ENCODE measurements at regions of chr13 and their contacts with region 1.

Region 1: DNA sequence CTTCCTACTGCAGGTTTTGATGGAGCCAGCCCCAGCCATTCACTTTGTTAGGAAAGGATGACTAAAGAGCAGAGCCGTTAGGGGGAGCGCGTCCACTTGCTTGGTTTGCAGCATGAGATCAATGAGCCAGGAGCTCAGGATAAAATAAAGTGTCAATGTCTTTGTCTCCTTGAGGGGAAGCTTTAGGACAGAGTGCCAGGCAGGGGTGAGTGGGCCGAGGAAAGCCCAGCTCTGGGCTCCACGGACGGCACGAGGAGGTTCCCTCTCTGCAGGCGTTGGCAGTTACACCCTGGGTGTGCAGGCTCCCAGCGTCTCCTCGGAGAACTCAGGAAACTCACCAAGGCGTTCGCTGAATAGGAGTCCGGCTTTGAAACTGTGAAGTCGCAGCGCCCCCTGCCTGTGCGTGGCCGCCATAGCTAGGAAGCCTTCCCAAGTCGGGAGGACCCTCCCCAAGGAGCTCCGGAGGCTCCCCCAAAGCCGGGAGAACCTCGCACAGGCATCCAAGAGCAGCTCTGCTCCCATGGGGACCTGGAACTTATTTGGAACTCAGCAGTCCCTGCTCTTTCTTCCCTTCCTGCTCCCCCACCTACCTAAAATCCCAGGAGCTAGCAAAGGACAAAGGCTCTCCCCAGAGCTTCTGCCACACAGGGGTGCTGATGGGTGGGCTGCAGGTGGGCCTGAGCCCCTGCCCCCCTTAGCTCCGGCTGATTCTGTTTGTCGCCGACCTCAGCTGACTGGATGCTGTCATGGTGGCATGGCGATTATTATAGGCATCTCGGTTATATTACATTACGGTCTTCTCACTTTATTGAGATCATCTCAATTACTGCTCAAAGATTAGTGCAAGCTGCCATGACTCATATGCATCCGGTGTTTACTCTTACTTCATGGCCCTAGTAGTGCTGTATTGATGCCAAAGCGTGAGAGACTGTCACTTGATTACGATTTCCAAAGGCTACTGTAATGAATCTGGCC is 34.4 kb downstream of the GSX1 start:
- DNase-seq: peak; percentile 79
- ATAC-seq: peak; percentile 69
- H3K4me3 ChIP-seq: no peak overlapping the region
- H3K4me3 Mint-ChIP-seq: no peak overlapping the region
- H3K27ac ChIP-seq: no peak overlapping the region
- H3K27ac Mint-ChIP-seq: no peak overlapping the region
- H3K4me1 ChIP-seq: peaks cover 5 to 15% of the 10 kb centered on the region in 2 donors
- H3K4me1 Mint-ChIP-seq: peaks cover 7% of the 10 kb centered on the region
- H3K27me3 ChIP-seq: peaks cover 0 to 76% (median 27%) of the 10 kb centered on the region in 4 experiments
- H3K27me3 Mint-ChIP-seq: peaks cover 76% of the 10 kb centered on the region
- CTCF ChIP-seq: peak; percentile 90

Region 2: DNA sequence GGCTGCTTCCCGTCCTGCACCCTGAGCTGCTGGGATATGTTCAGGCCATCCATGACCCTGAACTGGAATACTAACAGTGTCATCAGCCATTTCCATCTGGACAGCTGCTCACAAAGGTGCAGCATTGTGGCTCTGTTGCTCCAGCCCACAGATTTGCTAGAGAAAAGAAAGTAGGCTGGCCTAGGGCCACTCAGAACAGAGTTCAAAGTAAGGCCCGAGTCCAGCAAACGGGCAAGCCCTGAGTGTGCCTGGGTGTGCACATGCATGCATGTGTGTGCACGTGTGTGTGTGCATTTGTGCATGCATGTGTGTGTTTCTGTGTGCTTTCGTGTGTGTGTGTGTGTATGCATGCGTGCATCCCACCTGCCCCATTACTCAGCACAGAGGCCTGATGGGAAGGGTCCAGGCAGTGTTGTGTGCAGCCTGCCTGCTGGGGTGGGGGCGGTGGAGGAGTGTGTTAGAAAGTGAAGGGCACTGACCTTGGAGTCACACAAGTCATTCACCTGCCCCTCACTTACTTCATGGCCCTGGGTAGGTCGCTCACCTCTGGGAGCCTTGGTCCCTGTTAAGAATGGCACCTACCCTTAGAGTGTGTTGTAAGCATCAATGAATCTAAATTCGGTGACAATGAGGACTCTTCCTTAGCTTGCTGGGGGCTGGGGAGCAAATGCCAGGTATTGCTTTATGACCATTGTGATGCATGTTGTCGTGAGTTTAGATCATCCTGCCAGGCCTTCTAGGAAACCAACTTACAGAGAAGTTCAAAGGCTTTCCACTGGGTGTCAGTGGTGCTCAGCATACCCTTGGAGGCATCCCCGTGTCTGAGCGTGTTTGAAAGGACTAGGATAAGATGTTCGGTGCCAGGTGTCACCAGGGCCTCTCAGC is 1119.3 kb before region 1 on chr13:
- CTCF ChIA-PET with region 1: no interaction called
- POLR2A ChIA-PET with region 1: no interaction called
- intact Hi-C with region 1: no loop called
- DNase-seq: peak; percentile 47
- ATAC-seq: no peak
- H3K4me3 ChIP-seq: no peak overlapping the region
- H3K4me3 Mint-ChIP-seq: no peak overlapping the region
- H3K27ac ChIP-seq: no peak overlapping the region
- H3K27ac Mint-ChIP-seq: no peak overlapping the region
- H3K4me1 ChIP-seq: no peaks in the 10 kb centered on the region
- H3K4me1 Mint-ChIP-seq: no peaks in the 10 kb centered on the region
- H3K27me3 ChIP-seq: peaks cover 0 to 3% (median 0%) of the 10 kb centered on the region in 4 experiments
- H3K27me3 Mint-ChIP-seq: peaks cover 16% of the 10 kb centered on the region
- CTCF ChIP-seq: peak; percentile 55

Region 3: GRCh38 chr13:26985285-26985878 is 841.3 kb before region 1 on chr13:
- CTCF ChIA-PET with region 1: interaction called, 62 read pairs
- POLR2A ChIA-PET with region 1: no interaction called
- intact Hi-C with region 1: loop called (anchors 1 kb)
- DNase-seq: peak; percentile 84
- ATAC-seq: peak; percentile 94
- H3K4me3 ChIP-seq: no peak overlapping the region
- H3K4me3 Mint-ChIP-seq: no peak overlapping the region
- H3K27ac ChIP-seq: no peak overlapping the region
- H3K27ac Mint-ChIP-seq: no peak overlapping the region
- H3K4me1 ChIP-seq: peaks cover 0 to 5% of the 10 kb centered on the region in 2 donors
- H3K4me1 Mint-ChIP-seq: peaks cover 4% of the 10 kb centered on the region
- H3K27me3 ChIP-seq: peaks cover 0 to 10% (median 0%) of the 10 kb centered on the region in 4 experiments
- H3K27me3 Mint-ChIP-seq: peaks cover 3% of the 10 kb centered on the region
- CTCF ChIP-seq: peak; percentile 84

Region 4: GRCh38 chr13:27374650-27375049 is 452.0 kb before region 1 on chr13:
- CTCF ChIA-PET with region 1: interaction called, 374 read pairs
- POLR2A ChIA-PET with region 1: no interaction called
- intact Hi-C with region 1: loop called (anchors 1 kb)
- DNase-seq: peak; percentile 77
- ATAC-seq: peak; percentile 85
- H3K4me3 ChIP-seq: no peak overlapping the region
- H3K4me3 Mint-ChIP-seq: no peak overlapping the region
- H3K27ac ChIP-seq: no peak overlapping the region
- H3K27ac Mint-ChIP-seq: no peak overlapping the region
- H3K4me1 ChIP-seq: no peaks in the 10 kb centered on the region
- H3K4me1 Mint-ChIP-seq: peaks cover 2% of the 10 kb centered on the region
- H3K27me3 ChIP-seq: peaks cover 0 to 7% (median 0%) of the 10 kb centered on the region in 4 experiments
- H3K27me3 Mint-ChIP-seq: peaks cover 34% of the 10 kb centered on the region
- CTCF ChIP-seq: peak; percentile 82

Region 5: DNA sequence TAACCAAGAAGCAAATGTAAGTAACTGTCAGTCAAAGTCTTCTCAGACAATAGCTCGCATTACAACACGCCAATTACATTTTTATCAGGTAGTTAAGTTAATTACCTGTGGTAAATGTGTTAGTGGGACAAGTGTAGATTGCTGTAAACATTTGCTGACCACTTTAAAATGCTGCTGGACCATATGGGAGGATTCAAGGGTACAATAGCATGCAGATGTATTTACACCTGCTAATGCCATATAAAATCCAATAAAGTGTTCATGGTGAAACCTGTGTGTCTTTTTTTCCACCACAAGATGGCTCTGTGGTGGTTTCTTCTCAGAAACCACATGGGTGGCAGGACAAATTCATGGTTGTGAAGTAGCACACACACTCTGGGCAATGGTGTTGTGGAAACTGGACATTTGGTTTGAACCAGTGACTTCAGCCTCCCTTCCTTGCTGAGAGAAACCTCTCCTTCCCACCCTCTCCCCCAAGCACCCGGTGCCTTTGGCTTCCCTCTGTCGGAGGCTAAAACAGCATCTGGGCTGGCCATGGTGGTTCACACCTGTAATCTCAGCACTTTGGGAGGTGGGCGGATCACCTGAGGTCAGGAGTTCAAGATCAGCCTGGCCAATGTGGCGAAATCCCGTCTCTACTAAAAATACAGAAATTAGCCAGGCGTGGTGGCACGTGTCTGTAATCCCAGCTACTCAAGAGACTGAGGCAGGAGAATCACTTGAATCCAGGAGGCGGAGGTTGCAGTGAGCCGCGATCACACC is 420.3 kb before region 1 on chr13:
- CTCF ChIA-PET with region 1: interaction called, 119 read pairs
- POLR2A ChIA-PET with region 1: no interaction called
- intact Hi-C with region 1: loop called (anchors 1 kb)
- DNase-seq: peak; percentile 69
- ATAC-seq: peak; percentile 57
- H3K4me3 ChIP-seq: no peak overlapping the region
- H3K4me3 Mint-ChIP-seq: no peak overlapping the region
- H3K27ac ChIP-seq: no peak overlapping the region
- H3K27ac Mint-ChIP-seq: no peak overlapping the region
- H3K4me1 ChIP-seq: peaks cover 7% of the 10 kb centered on the region in 2 donors
- H3K4me1 Mint-ChIP-seq: peaks cover 7% of the 10 kb centered on the region
- H3K27me3 ChIP-seq: peaks cover 0 to 3% (median 0%) of the 10 kb centered on the region in 4 experiments
- H3K27me3 Mint-ChIP-seq: peaks cover 33% of the 10 kb centered on the region
- CTCF ChIP-seq: peak; percentile 68

Region 6: GRCh38 chr13:27556109-27556508 is 270.6 kb before region 1 on chr13:
- CTCF ChIA-PET with region 1: interaction called, 27 read pairs
- POLR2A ChIA-PET with region 1: no interaction called
- intact Hi-C with region 1: no loop called
- DNase-seq: peak; percentile 21
- ATAC-seq: no peak
- H3K4me3 ChIP-seq: no peak overlapping the region
- H3K4me3 Mint-ChIP-seq: no peak overlapping the region
- H3K27ac ChIP-seq: no peak overlapping the region
- H3K27ac Mint-ChIP-seq: no peak overlapping the region
- H3K4me1 ChIP-seq: no peaks in the 10 kb centered on the region
- H3K4me1 Mint-ChIP-seq: no peaks in the 10 kb centered on the region
- H3K27me3 ChIP-seq: no peaks in the 10 kb centered on the region
- H3K27me3 Mint-ChIP-seq: no peaks in the 10 kb centered on the region
- CTCF ChIP-seq: no peak

Region 7: GRCh38 chr13:27839809-27840467 is 13.3 kb after region 1 on chr13:
- CTCF ChIA-PET with region 1: interaction called, 72 read pairs
- POLR2A ChIA-PET with region 1: no interaction called
- intact Hi-C with region 1: no loop called
- DNase-seq: no peak
- ATAC-seq: no peak
- H3K4me3 ChIP-seq: no peak overlapping the region
- H3K4me3 Mint-ChIP-seq: no peak overlapping the region
- H3K27ac ChIP-seq: no peak overlapping the region
- H3K27ac Mint-ChIP-seq: no peak overlapping the region
- H3K4me1 ChIP-seq: no peaks in the 10 kb centered on the region
- H3K4me1 Mint-ChIP-seq: no peaks in the 10 kb centered on the region
- H3K27me3 ChIP-seq: peaks cover 0 to 12% (median 5%) of the 10 kb centered on the region in 4 experiments
- H3K27me3 Mint-ChIP-seq: peaks cover 48% of the 10 kb centered on the region
- CTCF ChIP-seq: no peak

Region 8: GRCh38 chr13:27977476-27978300 is 151.0 kb after region 1 on chr13:
- CTCF ChIA-PET with region 1: interaction called, 327 read pairs
- POLR2A ChIA-PET with region 1: no interaction called
- intact Hi-C with region 1: no loop called
- DNase-seq: peak; percentile 54
- ATAC-seq: no peak
- H3K4me3 ChIP-seq: no peak overlapping the region
- H3K4me3 Mint-ChIP-seq: peak overlapping the region; percentile 64
- H3K27ac ChIP-seq: no peak overlapping the region
- H3K27ac Mint-ChIP-seq: no peak overlapping the region
- H3K4me1 ChIP-seq: peaks cover 46 to 51% of the 10 kb centered on the region in 2 donors
- H3K4me1 Mint-ChIP-seq: peaks cover 39% of the 10 kb centered on the region
- H3K27me3 ChIP-seq: peaks cover 0 to 86% (median 66%) of the 10 kb centered on the region in 4 experiments
- H3K27me3 Mint-ChIP-seq: peaks cover 79% of the 10 kb centered on the region
- CTCF ChIP-seq: no peak

Region 9: DNA sequence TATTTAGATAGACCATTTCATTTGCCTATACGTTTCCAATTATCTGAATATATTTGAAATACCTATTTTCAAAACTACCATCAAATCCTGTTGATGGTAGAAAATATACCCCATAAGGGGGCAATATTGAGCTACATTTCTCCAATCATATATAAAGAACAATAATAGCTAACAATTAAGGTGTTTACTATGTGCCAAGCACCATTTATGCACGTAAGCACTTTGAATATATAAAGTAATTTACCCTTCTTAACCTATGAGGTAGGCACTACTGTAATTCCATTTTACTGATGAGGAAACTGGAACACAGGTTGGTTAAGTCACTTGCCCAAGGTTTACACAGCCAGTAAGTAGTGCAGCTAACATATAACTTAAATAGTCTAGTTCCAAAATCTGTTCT is 1944.6 kb after region 1 on chr13:
- CTCF ChIA-PET with region 1: no interaction called
- POLR2A ChIA-PET with region 1: no interaction called
- intact Hi-C with region 1: no loop called
- DNase-seq: peak; percentile 69
- ATAC-seq: no peak
- H3K4me3 ChIP-seq: no peak overlapping the region
- H3K4me3 Mint-ChIP-seq: no peak overlapping the region
- H3K27ac ChIP-seq: no peak overlapping the region
- H3K27ac Mint-ChIP-seq: no peak overlapping the region
- H3K4me1 ChIP-seq: no peaks in the 10 kb centered on the region
- H3K4me1 Mint-ChIP-seq: no peaks in the 10 kb centered on the region
- H3K27me3 ChIP-seq: no peaks in the 10 kb centered on the region
- H3K27me3 Mint-ChIP-seq: no peaks in the 10 kb centered on the region
- CTCF ChIP-seq: peak; percentile 82